Right ventricle myocardium superior (tissue), 1 donor: ENCODE measurements at regions of chr17 and their contacts with region 1.

Region 1: GRCh38 chr17:49191917-49192741 is 18.2 kb downstream of the GNGT2 start:
- DNase-seq: peak; percentile 93
- ATAC-seq: peak; percentile 93

Region 2: DNA sequence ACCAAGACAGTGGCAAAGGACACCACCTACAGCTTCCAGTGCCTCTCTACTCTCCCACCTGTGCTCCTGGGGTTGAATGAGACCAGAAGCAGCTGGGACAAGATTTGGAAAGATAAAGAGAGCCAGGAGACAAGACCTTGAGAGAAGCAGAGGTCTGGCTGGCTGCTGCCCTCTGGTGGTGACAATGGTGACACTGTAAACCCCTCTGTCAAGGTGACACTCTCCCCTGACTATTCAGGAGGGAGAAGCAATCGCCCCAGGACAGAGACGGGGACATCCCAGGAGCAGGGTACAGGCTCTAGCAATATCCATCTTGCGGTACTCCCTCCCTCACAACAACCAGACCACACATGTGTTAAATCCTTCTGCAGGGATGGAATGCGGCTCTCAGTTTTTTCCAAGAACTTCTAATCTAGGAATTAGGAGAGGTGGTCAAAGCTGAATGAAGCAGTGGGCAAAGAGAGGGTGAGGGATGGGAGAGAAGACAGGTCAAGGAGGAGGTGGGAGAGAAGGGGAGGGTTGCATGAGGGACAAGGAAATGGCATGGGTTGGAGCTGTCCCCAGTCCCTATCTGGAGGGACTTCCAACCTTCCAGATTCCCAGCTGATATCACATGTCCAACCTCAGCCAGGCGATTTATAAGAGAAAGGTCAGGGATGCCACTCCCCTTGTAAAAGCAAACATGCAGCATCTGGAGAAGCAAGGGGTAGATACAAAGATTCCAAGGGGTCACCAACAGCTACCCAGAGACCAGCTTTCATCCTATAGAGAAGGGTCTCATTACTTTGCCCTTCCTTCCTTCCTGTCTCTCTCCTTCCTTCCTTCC is 35.5 kb after region 1 on chr17:
- intact Hi-C with region 1: loop called (anchors 5 kb)
- DNase-seq: peak; percentile 81
- ATAC-seq: peak; percentile 52

Region 3: DNA sequence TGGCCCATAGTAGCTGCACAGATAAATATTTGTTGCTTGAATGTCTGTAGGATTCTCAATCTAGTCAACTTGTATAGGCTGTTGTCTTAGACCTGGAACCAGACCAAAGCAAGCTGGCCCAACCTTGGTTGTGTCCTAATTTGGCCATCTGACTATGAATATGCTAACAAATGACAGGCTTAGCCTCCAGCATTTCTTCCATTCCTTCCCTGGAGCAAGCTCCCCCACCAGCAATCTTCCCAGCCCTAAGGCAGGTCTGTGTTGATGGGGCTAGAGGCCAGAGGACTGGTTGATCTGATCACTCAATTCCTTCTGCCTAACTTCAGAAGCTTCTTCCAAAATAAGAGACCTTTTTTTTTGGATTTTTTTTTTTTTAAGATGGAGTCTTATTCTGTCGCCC is 47.8 kb after region 1 on chr17:
- intact Hi-C with region 1: no loop called
- DNase-seq: no peak
- ATAC-seq: no peak